MCF 10A (cell line): ENCODE measurements at regions of chr11 and their contacts with region 1.

Region 1: GRCh38 chr11:120511116-120511819 is at the start of gene GRIK4:
- DNase-seq: peak; percentile 79
- H3K4me3 Mint-ChIP-seq: peak within 1 kb of the TSS; percentile 29
- H3K27ac Mint-ChIP-seq: no peak within 1 kb of the TSS
- H3K4me1 Mint-ChIP-seq: peaks cover 6% of the 10 kb centered on the region
- H3K27me3 Mint-ChIP-seq: peaks cover 60% of the 10 kb centered on the region
- CTCF ChIP-seq: peak; percentile 92
- total RNA-seq, gene GRIK4: not detected in 2 replicates

Region 2: GRCh38 chr11:120272303-120272702 is 239.0 kb before region 1 on chr11:
- CTCF ChIA-PET with region 1: no interaction called
- POLR2A ChIA-PET with region 1: no interaction called
- intact Hi-C with region 1: no loop called
- DNase-seq: peak; percentile 64
- H3K4me3 Mint-ChIP-seq: no peak overlapping the region
- H3K27ac Mint-ChIP-seq: peak overlapping the region; percentile 28
- H3K4me1 Mint-ChIP-seq: no peaks in the 10 kb centered on the region
- H3K27me3 Mint-ChIP-seq: peaks cover 34% of the 10 kb centered on the region
- CTCF ChIP-seq: no peak

Region 3: GRCh38 chr11:120682866-120683265 is 171.6 kb after region 1 on chr11:
- CTCF ChIA-PET with region 1: interaction called, 35 read pairs
- POLR2A ChIA-PET with region 1: no interaction called
- intact Hi-C with region 1: loop called (anchors 1 kb)
- DNase-seq: no peak
- H3K4me3 Mint-ChIP-seq: no peak overlapping the region
- H3K27ac Mint-ChIP-seq: no peak overlapping the region
- H3K4me1 Mint-ChIP-seq: no peaks in the 10 kb centered on the region
- H3K27me3 Mint-ChIP-seq: peaks cover 47% of the 10 kb centered on the region
- CTCF ChIP-seq: no peak

Region 4: GRCh38 chr11:120801801-120802689 is 290.8 kb after region 1 on chr11:
- CTCF ChIA-PET with region 1: interaction called, 5 read pairs
- POLR2A ChIA-PET with region 1: no interaction called
- intact Hi-C with region 1: loop called (anchors 1 kb)
- DNase-seq: peak; percentile 60
- H3K4me3 Mint-ChIP-seq: no peak overlapping the region
- H3K27ac Mint-ChIP-seq: no peak overlapping the region
- H3K4me1 Mint-ChIP-seq: no peaks in the 10 kb centered on the region
- H3K27me3 Mint-ChIP-seq: peaks cover 48% of the 10 kb centered on the region
- CTCF ChIP-seq: peak; percentile 77

Region 5: DNA sequence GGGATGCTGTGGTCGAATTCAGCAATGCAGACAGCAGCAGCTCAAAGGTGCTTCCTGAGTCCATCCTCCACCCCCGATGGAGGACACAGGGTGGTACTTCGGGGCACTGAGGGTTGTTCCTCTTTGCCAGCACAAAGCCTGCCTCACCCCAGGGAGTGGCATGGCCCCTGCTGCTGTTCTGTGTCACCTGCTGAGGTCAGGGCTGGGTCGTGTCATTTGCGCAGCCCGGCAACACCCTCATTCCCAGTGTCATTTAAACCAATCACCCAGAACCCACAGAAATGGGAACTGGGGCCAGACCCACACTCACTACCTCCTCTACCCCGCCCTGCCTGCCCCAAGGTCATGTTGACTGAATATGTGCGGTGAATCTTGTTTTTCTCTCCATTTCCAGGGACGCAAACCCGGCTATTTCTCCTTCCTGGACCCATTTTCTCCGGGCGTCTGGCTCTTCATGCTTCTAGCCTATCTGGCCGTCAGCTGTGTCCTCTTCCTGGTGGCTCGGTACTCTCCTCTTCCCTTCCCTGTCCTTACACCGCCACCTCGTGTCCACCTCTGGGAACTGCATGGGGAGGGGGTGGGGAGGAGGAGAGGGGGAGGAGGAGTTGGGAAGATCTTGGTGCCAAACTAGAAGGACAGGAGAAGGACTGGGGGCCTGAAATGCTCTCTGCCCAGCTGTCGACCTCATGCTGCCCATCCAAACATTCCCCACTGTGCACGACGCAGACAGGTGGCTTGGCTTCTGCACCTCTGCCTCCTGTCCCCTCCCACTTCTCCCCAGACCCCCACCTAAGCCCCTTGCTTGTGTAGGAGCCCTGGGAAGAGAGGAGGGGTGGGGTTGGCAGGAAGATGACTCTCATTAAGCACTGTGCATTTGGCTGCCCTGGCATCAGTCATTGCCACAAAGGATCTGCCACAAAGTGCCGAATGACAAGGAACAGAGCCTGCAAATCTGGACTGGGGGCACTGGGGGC is 441.5 kb after region 1 on chr11:
- CTCF ChIA-PET with region 1: interaction called, 36 read pairs
- POLR2A ChIA-PET with region 1: no interaction called
- intact Hi-C with region 1: loop called (anchors 1 kb)
- DNase-seq: peak; percentile 81
- H3K4me3 Mint-ChIP-seq: peak overlapping the region; percentile 49
- H3K27ac Mint-ChIP-seq: no peak overlapping the region
- H3K4me1 Mint-ChIP-seq: peaks cover 6% of the 10 kb centered on the region
- H3K27me3 Mint-ChIP-seq: peaks cover 54% of the 10 kb centered on the region
- CTCF ChIP-seq: peak; percentile 76

Region 6: GRCh38 chr11:121194731-121195596 is 683.7 kb after region 1 on chr11:
- CTCF ChIA-PET with region 1: interaction called, 12 read pairs
- POLR2A ChIA-PET with region 1: no interaction called
- intact Hi-C with region 1: loop called (anchors 1 kb)
- DNase-seq: peak; percentile 70
- H3K4me3 Mint-ChIP-seq: no peak overlapping the region
- H3K27ac Mint-ChIP-seq: no peak overlapping the region
- H3K4me1 Mint-ChIP-seq: no peaks in the 10 kb centered on the region
- H3K27me3 Mint-ChIP-seq: peaks cover 81% of the 10 kb centered on the region
- CTCF ChIP-seq: peak; percentile 87